GM18951 (cell line): ENCODE measurements at regions of chr12 and their contacts with region 1.

Region 1: GRCh38 chr12:7108796-7109571 is at the start of gene C1RL:
- POLR2A ChIP-seq: peak; percentile 16

Region 2: DNA sequence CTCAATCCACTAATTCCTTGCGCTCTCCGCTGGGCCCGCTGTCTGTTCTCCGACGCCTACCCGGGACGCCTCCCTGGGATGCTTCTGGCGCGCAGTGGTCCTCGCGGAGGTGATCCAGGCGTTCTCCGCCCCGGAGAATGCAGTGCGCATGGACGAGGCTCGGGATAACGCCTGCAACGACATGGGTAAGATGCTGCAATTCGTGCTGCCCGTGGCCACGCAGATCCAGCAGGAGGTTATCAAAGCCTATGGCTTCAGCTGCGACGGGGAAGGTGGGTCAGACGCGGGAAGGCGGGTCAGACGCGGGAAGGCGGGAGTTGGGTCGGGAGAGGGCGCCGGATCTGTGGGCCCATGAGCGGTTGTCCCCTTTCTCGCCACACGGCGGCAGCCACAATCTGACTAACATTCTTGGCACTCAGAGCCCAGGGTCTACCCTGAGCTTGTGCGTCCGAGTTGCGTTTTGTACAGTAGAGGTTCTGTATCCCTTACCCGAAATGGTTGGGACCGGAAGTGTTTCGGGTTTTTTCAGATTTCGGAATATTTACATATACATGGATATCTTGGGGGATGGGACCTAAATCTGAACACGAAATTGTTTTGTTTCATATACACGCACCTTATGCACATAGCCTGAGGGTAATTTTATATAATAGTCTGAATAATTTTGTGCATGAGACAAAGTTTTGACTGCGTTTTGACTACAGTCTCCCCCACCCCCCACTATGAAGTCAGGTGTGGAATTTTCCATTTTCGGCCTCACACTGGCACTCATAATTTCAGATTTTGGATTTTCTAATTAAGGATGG is 164.4 kb before region 1 on chr12:
- in situ Hi-C with region 1: loop called (anchors 10 kb)
- POLR2A ChIP-seq: no peak

Region 3: DNA sequence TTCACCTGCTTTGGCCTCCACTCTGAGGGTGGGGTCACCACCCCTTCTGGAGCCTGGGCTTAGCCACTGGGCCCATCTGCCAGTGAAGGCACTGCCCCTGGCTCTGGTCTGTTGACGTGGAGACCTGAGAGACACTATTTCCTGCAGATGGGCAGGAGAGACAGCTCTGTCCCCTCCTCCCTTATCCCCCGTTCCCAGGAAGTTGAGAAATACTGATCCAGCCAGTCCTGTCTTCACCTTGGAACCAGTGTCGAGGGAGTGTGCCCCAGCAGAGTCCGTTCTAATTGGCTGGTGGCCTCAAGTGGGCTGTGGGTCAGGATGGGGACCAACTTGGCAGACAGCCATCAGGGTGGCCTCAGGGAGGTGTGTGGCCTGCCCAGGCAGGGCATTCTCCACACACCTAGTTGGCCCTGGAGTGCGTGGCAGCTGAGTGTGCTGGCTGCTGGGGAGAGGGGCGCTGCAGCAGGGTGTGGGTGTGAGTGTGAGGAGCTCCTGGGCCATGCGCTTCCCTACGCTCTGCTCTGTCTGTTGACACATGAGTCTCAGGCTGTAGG is 46.6 kb after region 1 on chr12:
- in situ Hi-C with region 1: no loop called
- POLR2A ChIP-seq: no peak